GM13976 (cell line): ENCODE measurements at regions of chr11 and their contacts with region 1.

Region 1: GRCh38 chr11:56783448-56784041 is 35.0 kb upstream of the OR9G4 start:
- DNase-seq: peak; percentile 12
- CTCF ChIP-seq: peak; percentile 20

Region 2: GRCh38 chr11:55942785-55943392 is 840.7 kb before region 1 on chr11:
- in situ Hi-C with region 1: loop called (anchors 25 kb)
- DNase-seq: peak; percentile 13
- CTCF ChIP-seq: peak; percentile 28

Region 3: DNA sequence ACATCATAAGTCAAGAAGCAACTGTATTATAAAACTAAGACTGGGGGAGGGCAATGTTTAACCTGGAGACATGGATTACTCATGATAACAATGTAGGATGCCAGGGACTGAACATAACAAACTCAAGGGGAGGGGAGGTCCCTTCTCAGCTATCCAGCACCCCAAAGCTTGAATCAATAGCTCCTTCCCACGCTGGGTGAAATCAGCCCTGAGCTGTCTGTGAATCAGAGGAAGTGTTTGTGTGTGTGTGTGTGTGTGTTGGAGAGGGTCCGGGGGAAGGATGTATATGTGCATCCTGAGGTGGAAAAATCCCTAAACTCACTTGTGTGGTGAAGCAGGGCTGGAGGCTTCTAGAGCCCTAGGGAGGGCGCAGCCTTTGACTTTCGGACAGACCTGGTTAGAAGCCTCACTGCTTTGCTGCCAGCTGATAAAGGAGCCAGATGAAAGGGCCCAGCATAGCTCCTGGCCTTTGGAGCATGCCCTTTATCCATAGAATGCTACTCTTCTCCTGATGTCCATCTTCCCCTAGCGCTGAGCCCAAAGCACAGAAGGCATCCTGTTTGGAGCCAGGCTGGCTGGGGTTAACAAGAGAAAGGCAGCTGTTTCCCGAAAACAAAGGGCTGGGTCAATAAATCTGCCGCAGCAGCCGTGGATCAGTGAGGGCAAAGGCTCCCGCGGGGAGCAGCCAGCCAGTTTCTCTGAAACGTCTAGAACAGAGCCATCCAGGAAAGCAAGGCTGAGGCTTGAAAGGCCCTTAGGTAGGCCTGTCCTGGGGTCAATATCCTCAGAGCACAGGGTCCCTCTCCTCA is 505.4 kb after region 1 on chr11:
- in situ Hi-C with region 1: no loop called
- DNase-seq: no peak
- CTCF ChIP-seq: no peak

Region 4: DNA sequence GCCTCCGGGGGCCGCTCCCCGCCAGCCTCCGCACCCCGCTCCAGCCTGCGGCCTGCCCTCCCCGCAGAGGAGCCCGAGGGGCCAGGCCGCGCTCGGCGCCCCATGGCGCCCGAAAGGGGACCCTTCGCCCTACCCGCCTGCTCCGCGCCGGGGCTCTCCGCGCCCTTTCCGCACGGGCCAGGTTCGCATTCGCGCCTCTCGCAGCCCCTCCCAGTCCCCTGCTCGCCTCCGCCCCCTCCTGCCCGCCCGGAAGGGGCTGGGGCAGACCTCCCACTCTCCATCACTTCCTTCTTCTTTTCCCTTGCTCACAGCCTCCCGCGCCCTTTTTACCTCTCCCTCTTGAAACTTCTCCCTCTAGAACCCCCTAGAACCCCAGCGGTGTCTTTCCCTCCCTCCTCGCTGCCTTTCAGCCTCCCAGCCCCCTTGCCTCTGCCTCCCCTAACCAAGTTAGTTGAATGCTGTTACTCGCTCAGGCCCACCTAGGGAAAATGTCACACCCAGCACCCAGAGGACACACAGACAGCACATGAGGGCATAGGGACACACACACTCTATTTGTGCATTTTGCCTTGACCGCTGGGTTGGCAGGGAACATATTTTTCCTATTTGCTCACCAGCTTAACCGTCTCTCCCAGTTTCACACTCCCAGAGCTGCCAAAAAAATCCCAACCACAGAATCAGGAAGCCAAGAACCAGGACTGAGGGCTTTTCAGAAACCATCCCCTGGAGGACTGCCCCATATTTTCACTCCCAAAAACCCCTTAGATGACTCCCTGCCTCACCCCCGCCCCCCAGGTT is 643.6 kb after region 1 on chr11 and contains the start of gene SLC43A3:
- in situ Hi-C with region 1: no loop called
- DNase-seq: peak; percentile 86
- CTCF ChIP-seq: no peak